Naive thymus-derived CD8-positive, alpha-beta T cell (primary cell): ENCODE measurements at regions of chr7 and their contacts with region 1.

Region 1: GRCh38 chr7:154927624-154928143 is 75.2 kb downstream of the PAXIP1 start:
- DNase-seq: peak; percentile 50 to 90 (median 74)
- ATAC-seq: peak; percentile 64 to 70
- H3K4me3 Mint-ChIP-seq: peak overlapping the region; percentile 89 to 99 (median 95)
- H3K27ac Mint-ChIP-seq: peak overlapping the region; percentile 91 to 100 (median 99)
- H3K4me1 Mint-ChIP-seq: peaks cover 17 to 39% (median 36%) of the 10 kb centered on the region in 4 donors
- H3K27me3 Mint-ChIP-seq: peaks cover 0 to 2% (median under 1%) of the 10 kb centered on the region in 5 donors

Region 2: DNA sequence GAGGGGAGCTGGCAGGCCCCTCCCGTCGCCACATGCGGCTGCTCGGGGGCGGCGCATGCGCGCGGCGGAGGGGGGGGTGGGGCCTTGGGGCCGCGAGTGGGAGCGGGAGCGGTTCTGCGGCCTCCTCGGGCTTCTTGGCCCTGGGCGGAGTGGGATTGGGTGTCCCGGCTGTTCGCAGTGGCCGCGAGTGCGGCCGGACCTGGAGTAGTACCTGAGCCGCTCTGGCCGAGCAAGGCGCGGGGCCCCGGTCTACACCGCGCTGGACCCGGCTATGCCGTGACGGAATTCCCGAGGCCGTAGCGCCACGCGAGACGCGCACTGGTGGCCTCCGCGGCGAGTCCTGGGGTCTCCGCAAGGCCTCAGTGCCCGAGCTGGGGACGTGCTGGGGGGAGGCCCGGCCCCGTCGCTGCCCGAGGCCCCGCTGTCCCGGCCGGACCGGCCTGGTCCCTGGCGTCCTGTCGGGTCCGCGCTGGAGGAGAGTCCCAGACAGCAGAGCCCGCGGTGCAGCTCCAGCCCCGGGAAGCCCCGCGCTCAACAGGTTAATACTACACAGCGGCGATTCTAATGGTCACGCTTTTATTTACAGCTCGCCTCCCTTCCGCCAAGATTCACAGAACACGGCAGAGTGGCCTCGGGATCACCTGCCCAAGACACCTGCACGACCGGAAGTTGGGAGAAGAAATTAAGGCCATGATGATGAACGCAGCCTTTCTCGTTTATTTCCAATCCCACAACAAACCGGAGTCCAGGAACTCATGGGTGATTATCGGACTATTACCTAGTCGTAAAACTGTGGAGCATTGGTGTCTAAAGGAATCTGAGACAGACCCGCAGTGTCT is 75.9 kb after region 1 on chr7:
- POLR2A ChIA-PET with region 1: interaction called, 17 read pairs
- DNase-seq: peak; percentile 75 to 93 (median 88)
- ATAC-seq: peak; percentile 75 to 83
- H3K4me3 Mint-ChIP-seq: peak overlapping the region; percentile 83 to 97 (median 94)
- H3K27ac Mint-ChIP-seq: peak overlapping the region; percentile 74 to 97 (median 95)
- H3K4me1 Mint-ChIP-seq: peaks cover 5 to 20% (median 17%) of the 10 kb centered on the region in 4 donors
- H3K27me3 Mint-ChIP-seq: no peaks in the 10 kb centered on the region